ENCODE measurements at regions of chr15 and their contacts with region 1.

Region 1: GRCh38 chr15:74842581-74843444 is at the start of gene ULK3:
- DNase-seq: peak; percentile 93 to 95
- H3K4me3 ChIP-seq: peak within 1 kb of the TSS; percentile 90
- H3K4me3 Mint-ChIP-seq: peak within 1 kb of the TSS; percentile 84
- H3K27ac Mint-ChIP-seq: peak within 1 kb of the TSS; percentile 80
- H3K4me1 ChIP-seq: peaks cover 13% of the 10 kb centered on the region
- H3K4me1 Mint-ChIP-seq: peaks cover 6% of the 10 kb centered on the region
- H3K27me3 ChIP-seq: no peaks in the 10 kb centered on the region
- H3K27me3 Mint-ChIP-seq: no peaks in the 10 kb centered on the region
- CTCF ChIP-seq: peak; percentile 40 to 81
- total RNA-seq, gene ULK3: 28.2 and 33.4 TPM in 2 replicates

Region 2: DNA sequence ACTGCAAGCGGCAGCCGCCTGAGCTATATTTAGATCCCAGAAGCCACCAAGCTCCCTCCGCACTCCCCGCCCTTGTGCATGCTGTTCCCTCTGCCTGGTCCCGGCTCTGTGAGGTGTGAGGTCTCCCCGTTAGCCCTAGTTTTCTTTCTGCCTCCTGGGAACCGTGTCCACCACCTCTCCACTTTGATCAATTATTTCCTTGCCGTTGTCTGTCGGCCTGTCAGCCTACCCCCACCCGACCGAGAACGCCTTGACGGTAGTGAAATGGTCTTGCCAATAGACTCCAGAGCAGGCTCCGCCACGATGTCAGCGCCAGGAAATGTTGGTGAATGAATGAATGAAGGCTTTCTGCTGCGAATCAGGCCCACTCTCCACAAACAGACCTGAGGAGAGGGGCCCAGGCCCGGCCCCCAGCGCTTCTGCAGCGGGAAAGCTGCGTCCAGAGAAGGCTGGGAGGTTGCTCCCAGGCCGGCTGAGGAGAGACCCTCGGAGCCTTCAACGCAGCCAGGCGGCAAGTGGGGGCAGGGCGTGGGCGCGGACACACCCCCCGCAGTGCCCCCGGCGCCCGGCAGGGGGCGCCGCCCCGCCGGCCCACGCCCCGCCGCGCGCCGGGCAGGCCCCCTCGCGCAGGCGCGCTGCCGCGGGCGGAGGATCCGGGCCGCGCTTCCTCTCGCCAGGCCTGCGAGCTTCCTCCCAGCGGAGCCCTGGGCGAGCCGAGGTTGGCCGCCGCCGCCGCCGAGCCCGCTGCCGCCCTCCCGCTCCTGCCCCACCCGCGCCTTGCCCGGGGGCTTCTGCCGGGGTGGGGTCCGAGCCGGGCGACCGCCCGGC is 61.2 kb before region 1 on chr15 and contains the start of gene CSK:
- CTCF ChIA-PET with region 1: interaction called, 3 read pairs
- POLR2A ChIA-PET with region 1: no interaction called
- intact Hi-C with region 1: loop called (anchors 2 kb)
- DNase-seq: peak in 1 of 2 experiments; percentile 76
- H3K4me3 ChIP-seq: peak within 1 kb of the TSS; percentile 82
- H3K4me3 Mint-ChIP-seq: peak within 1 kb of the TSS; percentile 90
- H3K27ac Mint-ChIP-seq: peak within 1 kb of the TSS; percentile 55
- H3K4me1 ChIP-seq: peaks cover 32% of the 10 kb centered on the region
- H3K4me1 Mint-ChIP-seq: peaks cover 31% of the 10 kb centered on the region
- H3K27me3 ChIP-seq: no peaks in the 10 kb centered on the region
- H3K27me3 Mint-ChIP-seq: no peaks in the 10 kb centered on the region
- CTCF ChIP-seq: peak; percentile 41 to 73
- total RNA-seq, gene CSK: 62.7 and 62.8 TPM in 2 replicates

Region 3: GRCh38 chr15:74799856-74800547 is 42.8 kb before region 1 on chr15:
- CTCF ChIA-PET with region 1: no interaction called
- POLR2A ChIA-PET with region 1: no interaction called
- intact Hi-C with region 1: no loop called
- DNase-seq: peak; percentile 61 to 83
- H3K4me3 ChIP-seq: no peak overlapping the region
- H3K4me3 Mint-ChIP-seq: no peak overlapping the region
- H3K27ac Mint-ChIP-seq: no peak overlapping the region
- H3K4me1 ChIP-seq: no peaks in the 10 kb centered on the region
- H3K4me1 Mint-ChIP-seq: no peaks in the 10 kb centered on the region
- H3K27me3 ChIP-seq: no peaks in the 10 kb centered on the region
- H3K27me3 Mint-ChIP-seq: no peaks in the 10 kb centered on the region
- CTCF ChIP-seq: peak; percentile 95 to 98

Region 4: DNA sequence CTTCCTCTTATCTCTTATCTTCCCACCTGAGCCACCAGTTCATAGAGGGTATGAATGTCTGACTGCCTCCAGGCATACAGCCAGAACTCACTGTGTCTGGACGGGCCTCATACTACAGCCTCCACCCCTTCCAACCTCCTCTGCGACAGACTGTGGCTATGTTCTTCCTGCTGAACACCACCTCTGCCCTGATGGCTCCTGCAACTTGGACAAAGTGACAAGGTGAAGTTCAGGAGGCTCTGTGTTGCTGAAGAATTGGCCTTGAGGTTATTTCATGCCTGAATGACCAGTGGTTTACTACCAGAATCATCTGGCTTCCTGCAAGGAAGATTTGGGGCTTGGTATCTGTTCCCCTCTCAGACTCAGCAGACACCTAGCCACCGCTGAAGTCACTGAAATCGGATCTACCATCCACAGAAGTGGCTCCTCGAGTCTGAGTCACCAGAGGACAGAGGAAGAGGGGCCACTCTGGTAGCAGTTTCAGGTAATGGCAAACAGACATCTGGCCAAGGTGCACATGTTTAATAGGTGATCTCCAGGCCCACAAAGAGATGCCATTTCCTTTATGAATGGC is 14.4 kb after region 1 on chr15:
- CTCF ChIA-PET with region 1: no interaction called
- POLR2A ChIA-PET with region 1: interaction called, 21 read pairs
- intact Hi-C with region 1: no loop called
- DNase-seq: no peak
- H3K4me3 ChIP-seq: no peak overlapping the region
- H3K4me3 Mint-ChIP-seq: no peak overlapping the region
- H3K27ac Mint-ChIP-seq: no peak overlapping the region
- H3K4me1 ChIP-seq: peaks cover 10% of the 10 kb centered on the region
- H3K4me1 Mint-ChIP-seq: peaks cover 15% of the 10 kb centered on the region
- H3K27me3 ChIP-seq: no peaks in the 10 kb centered on the region
- H3K27me3 Mint-ChIP-seq: no peaks in the 10 kb centered on the region
- CTCF ChIP-seq: no peak

Region 5: GRCh38 chr15:74873036-74873755 is 30.4 kb after region 1 on chr15 and contains the start of gene SCAMP2:
- CTCF ChIA-PET with region 1: no interaction called
- POLR2A ChIA-PET with region 1: no interaction called
- intact Hi-C with region 1: loop called (anchors 2 kb)
- DNase-seq: peak; percentile 92 to 96
- H3K4me3 ChIP-seq: peak within 1 kb of the TSS; percentile 81
- H3K4me3 Mint-ChIP-seq: peak within 1 kb of the TSS; percentile 82
- H3K27ac Mint-ChIP-seq: peak within 1 kb of the TSS; percentile 81
- H3K4me1 ChIP-seq: peaks cover 33% of the 10 kb centered on the region
- H3K4me1 Mint-ChIP-seq: peaks cover 17% of the 10 kb centered on the region
- H3K27me3 ChIP-seq: no peaks in the 10 kb centered on the region
- H3K27me3 Mint-ChIP-seq: no peaks in the 10 kb centered on the region
- CTCF ChIP-seq: no peak
- total RNA-seq, gene SCAMP2: 97.4 and 98.5 TPM in 2 replicates

Region 6: DNA sequence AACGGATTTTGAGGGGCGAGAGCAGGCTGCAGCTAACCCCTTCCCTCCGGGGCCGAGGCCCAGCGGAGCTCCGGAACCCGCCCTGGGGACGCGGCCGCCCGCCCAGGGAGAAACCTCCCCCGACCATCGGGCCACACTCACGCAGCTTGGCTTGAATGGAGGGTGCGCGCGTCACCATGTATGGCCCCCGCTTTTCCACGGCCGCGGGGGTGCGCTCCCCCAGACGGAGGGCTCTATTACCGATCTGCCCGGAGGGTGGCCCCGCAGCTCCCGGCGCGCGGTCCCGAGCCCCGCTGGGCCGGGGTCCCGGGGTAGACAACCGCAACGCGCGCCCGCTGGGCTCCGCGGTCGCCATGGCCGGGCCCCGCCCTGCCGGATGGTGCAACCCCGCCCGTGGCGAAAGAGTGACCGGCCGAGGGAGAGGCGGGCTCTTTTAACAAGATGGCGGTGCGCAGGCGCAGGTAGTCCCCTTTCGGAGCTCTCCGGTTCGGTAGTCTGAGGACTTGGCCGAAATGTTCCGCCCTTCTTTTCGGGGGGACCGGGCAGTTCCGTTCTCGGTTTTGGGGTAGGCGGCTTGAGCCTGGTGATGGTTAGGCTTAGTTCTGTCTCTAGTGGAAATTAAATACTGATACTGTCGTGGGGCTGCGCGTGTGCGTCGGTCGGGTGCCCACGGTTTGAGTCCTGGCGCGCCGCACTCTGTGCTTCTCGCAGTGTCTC is 63.8 kb after region 1 on chr15 and contains the start of gene FAM219B:
- CTCF ChIA-PET with region 1: interaction called, 9 read pairs
- POLR2A ChIA-PET with region 1: interaction called, 7 read pairs
- intact Hi-C with region 1: loop called (anchors 2 kb)
- DNase-seq: peak; percentile 88 to 93
- H3K4me3 ChIP-seq: peak within 1 kb of the TSS; percentile 79
- H3K4me3 Mint-ChIP-seq: peak within 1 kb of the TSS; percentile 99
- H3K27ac Mint-ChIP-seq: peak within 1 kb of the TSS; percentile 97
- H3K4me1 ChIP-seq: peaks cover 4% of the 10 kb centered on the region; the same call in 1 of the 2 replicates
- H3K4me1 Mint-ChIP-seq: no peaks in the 10 kb centered on the region
- H3K27me3 ChIP-seq: no peaks in the 10 kb centered on the region
- H3K27me3 Mint-ChIP-seq: no peaks in the 10 kb centered on the region
- CTCF ChIP-seq: no peak
- total RNA-seq, gene FAM219B: 73.7 and 75.4 TPM in 2 replicates

Region 7: DNA sequence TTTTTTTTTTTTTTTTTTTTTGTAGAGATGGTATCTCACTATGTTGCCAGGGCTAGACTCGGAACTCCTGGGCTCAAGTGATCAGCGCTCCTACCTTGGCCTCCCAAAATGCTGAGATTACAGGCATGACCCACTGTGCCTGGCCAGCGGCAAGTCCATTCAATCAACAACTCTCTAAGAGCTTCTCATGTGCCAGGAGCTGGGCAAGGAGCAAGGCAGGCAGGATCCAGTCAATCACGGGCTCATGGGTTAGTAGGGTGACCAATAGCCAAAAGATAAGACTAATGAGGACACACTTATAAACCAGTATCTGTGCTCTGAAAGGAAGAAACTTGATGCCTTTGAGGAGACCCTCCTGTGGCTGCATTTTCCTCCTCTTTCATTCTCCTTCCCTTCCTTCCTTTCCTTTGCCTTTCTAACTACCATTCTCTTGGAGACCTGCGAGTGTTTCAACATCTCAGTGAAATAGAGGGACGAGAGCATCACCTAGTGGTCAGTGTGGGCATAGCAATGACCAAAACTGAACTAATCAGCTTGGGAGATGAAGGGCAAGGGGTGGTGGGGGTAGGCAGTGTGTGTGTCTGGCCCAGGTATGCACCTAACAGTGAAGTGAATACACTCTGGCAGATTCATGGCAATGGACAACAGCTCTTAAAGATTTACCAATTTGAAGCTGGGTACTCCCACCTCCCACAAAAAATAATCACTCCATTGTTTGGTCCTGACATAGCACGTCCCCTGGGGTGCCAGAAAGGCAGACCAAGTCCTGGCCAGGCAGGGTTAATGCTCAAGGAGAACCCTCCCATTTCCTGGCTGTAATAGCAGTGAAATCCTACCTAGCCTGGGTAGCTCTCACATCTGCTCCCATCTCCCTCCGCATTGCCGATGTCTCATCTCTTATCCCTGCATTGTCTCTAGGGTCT is 107.5 kb after region 1 on chr15:
- CTCF ChIA-PET with region 1: no interaction called
- POLR2A ChIA-PET with region 1: no interaction called
- intact Hi-C with region 1: loop called (anchors 5 kb)
- DNase-seq: peak; percentile 80 to 84
- H3K4me3 ChIP-seq: no peak overlapping the region
- H3K4me3 Mint-ChIP-seq: no peak overlapping the region
- H3K27ac Mint-ChIP-seq: no peak overlapping the region
- H3K4me1 ChIP-seq: peaks cover 14% of the 10 kb centered on the region
- H3K4me1 Mint-ChIP-seq: peaks cover 14% of the 10 kb centered on the region
- H3K27me3 ChIP-seq: no peaks in the 10 kb centered on the region
- H3K27me3 Mint-ChIP-seq: no peaks in the 10 kb centered on the region
- CTCF ChIP-seq: peak; percentile 92 to 96

Measured in Caco-2 (cell line).